Activated CD4-positive, alpha-beta T cell treated with anti-CD3 and anti-CD28 coated beads for 36 hours (primary cell): ENCODE measurements at regions of chr19 and their contacts with region 1.

Region 1: GRCh38 chr19:7098701-7099596 is 29.4 kb downstream of the ZNF557 start:
- DNase-seq: peak; percentile 94
- ATAC-seq: peak; percentile 95
- H3K4me3 Mint-ChIP-seq: peak overlapping the region; percentile 90
- H3K27ac Mint-ChIP-seq: peak overlapping the region; percentile 92
- H3K4me1 Mint-ChIP-seq: peaks cover 27% of the 10 kb centered on the region
- H3K27me3 Mint-ChIP-seq: no peaks in the 10 kb centered on the region

Region 2: GRCh38 chr19:6697291-6697690 is 401.7 kb before region 1 on chr19:
- CTCF ChIA-PET with region 1: no interaction called
- POLR2A ChIA-PET with region 1: no interaction called
- intact Hi-C with region 1: no loop called
- DNase-seq: no peak
- ATAC-seq: peak; percentile 14
- H3K4me3 Mint-ChIP-seq: no peak overlapping the region
- H3K27ac Mint-ChIP-seq: no peak overlapping the region
- H3K4me1 Mint-ChIP-seq: peaks cover 4% of the 10 kb centered on the region
- H3K27me3 Mint-ChIP-seq: no peaks in the 10 kb centered on the region

Region 3: DNA sequence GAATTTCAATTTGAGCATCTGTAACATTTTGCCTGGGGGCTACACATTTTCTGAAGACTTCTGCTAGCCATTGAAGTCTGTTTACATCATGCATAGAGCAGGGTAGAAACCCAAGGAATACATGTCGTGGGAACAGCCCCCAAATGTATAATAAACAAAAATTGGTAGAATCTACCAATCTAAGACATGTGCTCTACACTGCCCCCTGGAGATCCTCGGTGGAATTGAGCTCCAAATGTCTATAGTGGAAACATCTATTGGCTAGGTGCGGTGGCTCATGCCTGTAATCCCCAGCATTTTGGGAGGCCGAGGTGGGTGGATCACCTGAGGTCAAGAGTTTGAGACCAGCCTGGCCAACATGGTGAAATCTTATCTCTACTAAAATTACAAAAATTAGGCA is 135.0 kb before region 1 on chr19:
- CTCF ChIA-PET with region 1: no interaction called
- POLR2A ChIA-PET with region 1: no interaction called
- intact Hi-C with region 1: no loop called
- DNase-seq: peak; percentile 68
- ATAC-seq: no peak
- H3K4me3 Mint-ChIP-seq: no peak overlapping the region
- H3K27ac Mint-ChIP-seq: no peak overlapping the region
- H3K4me1 Mint-ChIP-seq: peaks cover 2% of the 10 kb centered on the region
- H3K27me3 Mint-ChIP-seq: no peaks in the 10 kb centered on the region

Region 4: DNA sequence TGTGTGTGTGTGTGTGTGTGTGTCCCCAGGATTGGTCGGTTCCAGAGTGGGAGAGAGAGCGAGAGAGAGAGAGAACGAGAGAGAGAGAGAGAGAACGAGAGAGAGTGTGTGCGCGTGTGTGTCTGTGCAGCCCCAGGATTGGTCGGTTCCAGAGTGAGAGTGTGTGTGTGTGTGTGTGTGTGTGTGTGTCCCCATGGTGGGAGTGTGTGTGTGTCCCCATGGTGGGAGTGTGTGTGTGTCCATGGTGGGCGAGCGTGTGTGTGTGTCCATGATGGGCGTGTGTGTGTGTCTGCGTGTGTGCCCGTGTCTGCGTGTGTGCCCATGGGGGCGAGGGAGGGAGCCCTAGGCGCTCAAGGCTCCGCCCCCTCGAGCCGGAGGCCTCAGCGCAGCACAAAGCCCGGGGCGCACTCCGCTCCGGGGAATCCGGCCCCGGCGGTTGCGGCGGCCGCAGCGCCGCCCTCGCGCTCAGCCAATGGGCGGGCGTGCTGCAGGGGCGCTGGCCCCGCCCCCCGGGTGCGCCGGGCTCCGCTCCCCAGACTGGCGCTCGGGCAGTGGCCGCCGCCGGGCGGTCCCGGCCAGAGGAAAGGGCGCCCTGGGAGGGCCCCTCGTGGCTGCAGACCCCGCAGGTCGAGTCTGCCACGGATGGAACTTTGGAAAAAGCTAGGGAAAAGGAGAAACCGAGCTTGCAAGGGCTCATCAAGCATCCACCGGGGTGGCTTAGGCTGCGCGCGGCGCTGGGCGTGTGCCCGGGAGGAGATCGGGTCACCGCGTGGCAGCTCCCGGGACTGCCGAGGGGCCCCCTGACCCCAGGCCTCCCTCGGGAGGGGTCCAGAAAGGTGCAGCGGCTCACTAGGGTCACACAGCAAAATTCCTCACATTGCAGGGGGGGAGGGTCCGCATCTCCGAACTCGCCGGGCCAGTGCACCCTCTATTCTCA is 99.1 kb after region 1 on chr19:
- CTCF ChIA-PET with region 1: interaction called, 4 read pairs
- POLR2A ChIA-PET with region 1: no interaction called
- intact Hi-C with region 1: loop called in 1 of 2 experiments (anchors 1 kb)
- DNase-seq: peak; percentile 95
- ATAC-seq: peak; percentile 84
- H3K4me3 Mint-ChIP-seq: peak overlapping the region; percentile 77
- H3K27ac Mint-ChIP-seq: peak overlapping the region; percentile 88
- H3K4me1 Mint-ChIP-seq: peaks cover 16% of the 10 kb centered on the region
- H3K27me3 Mint-ChIP-seq: peaks cover 21% of the 10 kb centered on the region

Region 5: DNA sequence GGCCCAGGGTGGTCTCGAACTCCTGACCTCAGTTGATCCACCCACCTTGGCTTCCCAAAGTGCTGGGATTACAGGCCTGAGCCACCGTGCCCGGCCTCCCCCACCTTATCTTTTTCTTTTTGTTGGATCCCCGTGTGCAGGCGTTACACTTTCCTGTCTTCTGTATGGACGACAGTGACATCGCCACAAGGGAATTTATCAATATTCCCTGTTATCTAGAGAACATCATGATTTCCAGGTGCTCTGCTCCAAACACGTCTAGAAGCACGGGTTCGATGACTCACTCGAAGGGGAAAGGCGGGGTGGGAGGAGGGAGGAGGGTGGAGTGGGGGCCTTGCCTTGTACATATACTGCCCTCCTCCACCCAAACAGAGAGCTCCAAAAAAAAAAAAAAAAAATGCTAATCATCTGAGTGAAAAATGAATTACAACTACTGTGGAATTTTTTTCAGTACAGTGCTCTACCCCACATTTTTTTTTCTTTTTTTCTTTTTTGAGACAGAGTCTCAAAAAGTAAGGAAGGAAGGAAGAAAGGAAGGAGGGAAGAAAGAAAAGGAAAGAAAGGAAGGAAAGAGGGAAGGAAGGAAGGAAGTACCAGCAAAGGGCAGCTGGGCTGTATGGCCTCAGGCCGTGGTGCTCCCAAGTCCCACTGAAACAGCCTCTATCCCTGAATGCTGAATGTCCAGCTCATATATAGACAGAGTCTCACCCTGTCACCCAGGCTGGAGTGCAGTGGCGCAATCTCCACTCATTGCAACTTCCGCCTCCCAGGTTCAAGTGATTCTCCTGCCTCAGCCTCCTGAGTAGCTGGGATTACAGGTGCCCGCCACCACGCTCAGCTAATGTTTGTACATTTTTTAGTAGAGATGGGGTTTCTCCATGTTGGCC is 158.4 kb after region 1 on chr19:
- CTCF ChIA-PET with region 1: no interaction called
- POLR2A ChIA-PET with region 1: no interaction called
- intact Hi-C with region 1: no loop called
- DNase-seq: no peak
- ATAC-seq: no peak
- H3K4me3 Mint-ChIP-seq: no peak overlapping the region
- H3K27ac Mint-ChIP-seq: no peak overlapping the region
- H3K4me1 Mint-ChIP-seq: no peaks in the 10 kb centered on the region
- H3K27me3 Mint-ChIP-seq: no peaks in the 10 kb centered on the region

Region 6: DNA sequence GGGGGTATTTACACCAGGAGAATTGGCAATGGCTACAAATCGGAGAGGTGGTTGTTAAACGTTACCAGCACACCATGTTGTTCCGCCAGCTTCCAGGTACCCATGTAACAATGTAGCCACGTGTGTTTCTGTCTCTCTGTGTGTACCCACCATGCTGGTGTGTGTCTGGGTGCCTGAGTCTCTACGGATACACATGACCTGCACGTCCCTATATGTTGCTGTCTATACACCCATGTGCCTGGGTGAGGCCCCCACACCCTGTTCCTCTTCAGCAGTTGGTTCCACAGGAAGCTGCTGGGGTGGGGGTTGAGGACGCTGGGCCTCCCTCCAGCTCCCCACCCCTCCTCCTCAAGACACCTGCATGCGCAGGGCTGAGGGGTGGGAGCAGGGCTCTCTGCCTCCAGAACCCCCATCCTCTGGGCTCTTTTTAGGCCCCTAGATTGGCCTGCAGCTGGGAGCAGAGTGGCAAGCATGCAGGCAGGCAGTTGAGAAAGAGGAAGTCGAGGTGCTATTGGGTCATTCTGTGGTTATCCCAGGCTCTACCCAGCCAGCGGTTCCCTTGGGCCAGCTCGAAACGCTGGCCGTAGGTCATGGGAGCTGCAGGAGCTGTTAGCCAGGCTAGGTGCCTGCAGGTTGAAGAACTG is 249.8 kb after region 1 on chr19 and contains the start of gene ARHGEF18:
- CTCF ChIA-PET with region 1: interaction called, 16 read pairs
- POLR2A ChIA-PET with region 1: interaction called, 3 read pairs
- intact Hi-C with region 1: no loop called
- DNase-seq: peak; percentile 75
- ATAC-seq: peak; percentile 71
- H3K4me3 Mint-ChIP-seq: peak within 1 kb of the TSS; percentile 84
- H3K27ac Mint-ChIP-seq: peak within 1 kb of the TSS; percentile 90
- H3K4me1 Mint-ChIP-seq: peaks cover 60% of the 10 kb centered on the region
- H3K27me3 Mint-ChIP-seq: no peaks in the 10 kb centered on the region
- total RNA-seq, gene ARHGEF18: 36.6 to 39.3 TPM

Region 7: DNA sequence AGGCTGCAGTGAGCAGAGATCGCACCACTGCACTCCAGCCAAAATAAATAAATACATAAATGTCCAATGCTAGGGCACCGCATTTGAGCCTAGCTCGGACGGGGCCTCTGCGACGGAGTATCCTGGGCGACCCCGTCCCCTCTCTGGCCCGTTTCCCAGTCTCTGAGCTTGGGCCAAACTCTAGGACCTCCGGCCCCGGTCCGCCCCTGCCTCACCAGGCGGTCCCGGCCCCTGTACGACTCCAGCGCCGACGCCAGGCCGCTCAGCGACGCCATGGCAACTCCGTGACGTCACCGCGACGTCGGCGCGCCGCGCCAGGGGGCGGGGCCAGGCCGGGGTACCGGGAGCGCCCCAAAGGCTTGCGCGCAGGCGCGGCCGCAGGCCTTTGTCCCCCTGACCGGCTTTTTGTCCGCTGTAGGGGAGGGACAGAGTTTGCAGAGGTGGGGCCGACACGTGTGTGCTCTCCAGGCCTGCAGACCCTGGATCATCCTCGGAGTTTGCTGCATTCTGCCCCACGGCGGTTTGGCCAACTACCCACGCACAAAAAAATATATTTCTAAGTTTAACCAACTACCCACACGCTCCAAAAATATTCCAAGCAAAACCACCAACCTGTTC is 389.9 kb after region 1 on chr19 and contains the start of gene PEX11G:
- CTCF ChIA-PET with region 1: no interaction called
- POLR2A ChIA-PET with region 1: no interaction called
- intact Hi-C with region 1: loop called in 1 of 2 experiments (anchors 2 kb)
- DNase-seq: peak; percentile 95
- ATAC-seq: peak; percentile 88
- H3K4me3 Mint-ChIP-seq: peak within 1 kb of the TSS; percentile 73
- H3K27ac Mint-ChIP-seq: peak within 1 kb of the TSS; percentile 76
- H3K4me1 Mint-ChIP-seq: peaks cover 20% of the 10 kb centered on the region
- H3K27me3 Mint-ChIP-seq: no peaks in the 10 kb centered on the region
- total RNA-seq, gene PEX11G: 0.51 to 1.1 TPM

Region 8: DNA sequence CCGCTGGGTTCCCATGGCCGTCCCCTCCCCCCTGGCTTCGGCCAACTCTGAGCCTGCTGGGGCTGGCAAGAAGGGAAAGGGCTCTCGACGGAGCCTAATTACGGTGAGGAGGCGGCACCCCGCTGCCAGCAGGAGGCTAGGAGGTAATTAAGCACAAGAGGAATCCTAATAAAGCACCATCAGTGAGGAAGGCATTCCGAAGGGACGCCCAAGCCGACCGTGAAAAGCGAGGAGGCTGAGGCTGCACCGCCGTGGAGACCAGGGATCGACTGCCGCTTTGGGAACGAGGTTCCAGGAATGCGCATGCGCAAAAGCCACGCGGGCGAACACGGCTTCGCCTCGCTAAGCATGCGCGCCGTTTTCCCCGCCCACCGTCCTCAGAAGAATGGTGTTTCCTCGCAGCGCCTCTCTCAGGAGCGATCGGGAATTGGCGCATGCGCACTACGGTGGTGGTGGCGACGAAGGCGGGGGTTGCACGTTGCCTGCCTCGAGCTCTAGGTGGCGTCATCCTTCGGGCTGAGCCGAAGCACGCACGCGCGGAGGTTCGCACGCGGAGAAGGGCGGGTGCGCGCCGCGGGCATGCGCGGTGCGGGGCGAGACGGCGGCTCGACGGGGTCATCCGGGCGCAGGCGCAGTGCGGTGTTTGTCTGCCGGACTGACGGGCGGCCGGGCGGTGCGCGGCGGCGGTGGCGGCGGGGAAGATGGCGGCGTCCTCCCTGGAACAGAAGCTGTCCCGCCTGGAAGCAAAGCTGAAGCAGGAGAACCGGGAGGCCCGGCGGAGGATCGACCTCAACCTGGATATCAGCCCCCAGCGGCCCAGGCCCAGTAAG is 804.5 kb after region 1 on chr19 and contains the start of gene MAP2K7:
- CTCF ChIA-PET with region 1: no interaction called
- POLR2A ChIA-PET with region 1: no interaction called
- intact Hi-C with region 1: loop called in 1 of 2 experiments (anchors 1 kb)
- DNase-seq: peak; percentile 100
- ATAC-seq: peak; percentile 91
- H3K4me3 Mint-ChIP-seq: peak within 1 kb of the TSS; percentile 85
- H3K27ac Mint-ChIP-seq: peak within 1 kb of the TSS; percentile 92
- H3K4me1 Mint-ChIP-seq: peaks cover 22% of the 10 kb centered on the region
- H3K27me3 Mint-ChIP-seq: no peaks in the 10 kb centered on the region
- total RNA-seq, gene MAP2K7: 32.2 to 33.7 TPM